Naive thymus-derived CD4-positive, alpha-beta T cell (primary cell): ENCODE measurements at regions of chr14 and their contacts with region 1.

Region 1: DNA sequence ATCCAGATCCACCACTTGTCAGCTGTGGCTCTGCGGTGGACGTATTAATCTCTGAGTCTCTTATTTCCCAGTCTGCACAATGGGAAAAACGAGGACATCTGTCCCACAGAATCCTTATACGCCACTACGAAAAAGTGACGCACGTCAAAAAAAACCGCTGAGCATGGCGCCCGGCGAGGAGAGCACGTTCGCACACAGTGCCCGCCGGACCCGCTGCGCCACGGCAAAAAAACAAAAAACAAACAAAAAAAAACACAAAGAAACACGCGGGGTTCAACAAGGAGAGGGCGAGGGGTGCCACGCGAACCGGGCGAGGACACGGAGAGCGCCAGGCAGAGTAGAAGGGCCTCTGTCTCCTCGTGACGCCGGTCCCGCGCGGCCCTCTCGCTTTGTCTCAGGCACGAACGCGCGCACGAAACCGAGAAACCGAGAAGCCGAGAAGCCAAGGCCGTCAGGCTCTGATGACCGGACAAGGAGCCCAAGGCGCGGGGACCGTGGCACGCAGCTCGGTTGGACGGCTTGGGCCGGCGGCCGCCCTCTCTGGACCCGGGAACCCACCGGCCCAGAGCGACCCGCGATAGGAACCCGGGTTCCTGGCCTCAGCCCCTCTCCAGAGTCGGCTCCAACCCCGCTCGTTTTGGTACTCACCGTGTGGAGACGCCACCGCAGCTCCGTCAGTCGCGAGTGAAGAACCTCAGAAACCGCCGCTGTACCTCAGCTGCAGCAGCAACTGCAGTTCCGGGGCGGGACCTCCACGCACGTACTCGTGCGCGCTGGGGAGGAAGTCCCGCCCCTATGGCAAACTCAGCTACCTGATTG is at the start of gene DDX24:
- DNase-seq: peak; percentile 92 to 97 (median 96)
- ATAC-seq: peak; percentile 99
- H3K4me3 ChIP-seq: peak within 1 kb of the TSS; percentile 74
- H3K4me3 Mint-ChIP-seq: peak within 1 kb of the TSS; percentile 90 to 100 (median 99)
- H3K27ac ChIP-seq: peak within 1 kb of the TSS; percentile 98
- H3K27ac Mint-ChIP-seq: peak within 1 kb of the TSS; percentile 97 to 100 (median 99)
- H3K4me1 ChIP-seq: peaks cover 32 to 38% of the 10 kb centered on the region in 2 donors
- H3K4me1 Mint-ChIP-seq: peaks cover 28 to 60% (median 53%) of the 10 kb centered on the region in 7 donors
- H3K27me3 ChIP-seq: no peaks in the 10 kb centered on the region
- H3K27me3 Mint-ChIP-seq: no peaks in the 10 kb centered on the region
- total RNA-seq, gene DDX24: 214 to 438 (median 333) TPM

Region 2: GRCh38 chr14:92263681-92264080 is 1817.0 kb before region 1 on chr14:
- CTCF ChIA-PET with region 1: no interaction called
- POLR2A ChIA-PET with region 1: no interaction called
- intact Hi-C with region 1: no loop called
- DNase-seq: no peak
- ATAC-seq: peak; percentile 52
- H3K4me3 ChIP-seq: no peak overlapping the region
- H3K4me3 Mint-ChIP-seq: no peak overlapping the region
- H3K27ac ChIP-seq: no peak overlapping the region
- H3K27ac Mint-ChIP-seq: peak overlapping the region in 1 of 9 donors; percentile 7
- H3K4me1 ChIP-seq: no peaks in the 10 kb centered on the region
- H3K4me1 Mint-ChIP-seq: peaks cover 0 to 17% (median 0%) of the 10 kb centered on the region in 7 donors
- H3K27me3 ChIP-seq: no peaks in the 10 kb centered on the region
- H3K27me3 Mint-ChIP-seq: peaks cover 0 to 18% (median 0%) of the 10 kb centered on the region in 5 donors

Region 3: DNA sequence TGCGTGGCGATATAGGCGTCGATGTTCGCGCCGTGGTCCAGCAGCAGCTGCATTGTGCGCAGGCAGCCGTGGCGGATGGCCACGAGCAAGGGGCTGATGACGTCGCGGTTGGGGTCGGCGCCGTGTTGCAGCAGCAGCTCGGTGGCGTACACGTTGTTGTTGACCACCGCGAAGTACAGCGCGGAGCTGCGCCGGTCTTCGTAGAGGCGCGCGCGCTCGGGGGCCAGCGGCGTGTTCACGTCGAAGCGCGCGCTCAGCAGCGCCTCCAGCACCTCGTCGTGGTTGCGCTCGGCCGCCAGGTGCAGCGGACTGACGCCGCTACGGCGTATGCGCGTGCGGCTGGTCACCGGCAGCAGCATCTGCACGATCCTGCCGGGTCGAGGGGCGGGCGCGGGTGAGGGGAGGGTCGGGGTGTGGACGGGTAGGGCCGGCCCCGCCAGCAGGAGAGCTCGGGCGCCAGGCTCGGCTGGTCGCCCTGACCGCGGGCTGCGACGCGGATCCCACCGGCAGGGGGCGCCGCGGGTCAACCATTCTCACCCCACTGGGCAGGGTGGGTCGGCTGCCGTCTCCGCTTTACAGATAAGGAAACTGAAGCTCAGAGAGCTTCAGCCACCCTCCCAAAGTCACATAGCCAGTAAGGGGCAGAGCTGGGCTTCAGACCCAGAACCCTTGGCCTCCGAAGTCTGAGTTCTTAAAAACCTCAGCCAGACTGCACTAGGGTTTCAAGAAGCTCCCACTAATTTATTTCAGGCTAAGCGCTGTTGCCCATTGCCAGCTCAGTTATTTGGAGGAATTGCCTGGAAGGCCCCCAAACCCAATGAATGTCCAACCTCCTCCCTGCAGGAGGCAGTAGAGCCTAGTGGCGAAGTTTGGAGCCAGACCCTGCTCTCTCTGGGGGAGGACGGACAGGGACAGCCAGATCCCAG is 141.1 kb before region 1 on chr14:
- CTCF ChIA-PET with region 1: no interaction called
- POLR2A ChIA-PET with region 1: interaction called, 5 read pairs
- intact Hi-C with region 1: loop called in 1 of 2 experiments (anchors 2 kb)
- DNase-seq: peak; percentile 71 to 97 (median 87)
- ATAC-seq: peak; percentile 95
- H3K4me3 ChIP-seq: peak overlapping the region; percentile 60
- H3K4me3 Mint-ChIP-seq: peak overlapping the region; percentile 18 to 83 (median 68)
- H3K27ac ChIP-seq: no peak overlapping the region
- H3K27ac Mint-ChIP-seq: peak overlapping the region in 1 of 9 donors; percentile 71
- H3K4me1 ChIP-seq: peaks cover 4 to 8% of the 10 kb centered on the region in 2 donors
- H3K4me1 Mint-ChIP-seq: peaks cover 0 to 34% (median 3%) of the 10 kb centered on the region in 7 donors
- H3K27me3 ChIP-seq: no peaks in the 10 kb centered on the region
- H3K27me3 Mint-ChIP-seq: peaks cover 0 to 16% (median 0%) of the 10 kb centered on the region in 5 donors

Region 4: DNA sequence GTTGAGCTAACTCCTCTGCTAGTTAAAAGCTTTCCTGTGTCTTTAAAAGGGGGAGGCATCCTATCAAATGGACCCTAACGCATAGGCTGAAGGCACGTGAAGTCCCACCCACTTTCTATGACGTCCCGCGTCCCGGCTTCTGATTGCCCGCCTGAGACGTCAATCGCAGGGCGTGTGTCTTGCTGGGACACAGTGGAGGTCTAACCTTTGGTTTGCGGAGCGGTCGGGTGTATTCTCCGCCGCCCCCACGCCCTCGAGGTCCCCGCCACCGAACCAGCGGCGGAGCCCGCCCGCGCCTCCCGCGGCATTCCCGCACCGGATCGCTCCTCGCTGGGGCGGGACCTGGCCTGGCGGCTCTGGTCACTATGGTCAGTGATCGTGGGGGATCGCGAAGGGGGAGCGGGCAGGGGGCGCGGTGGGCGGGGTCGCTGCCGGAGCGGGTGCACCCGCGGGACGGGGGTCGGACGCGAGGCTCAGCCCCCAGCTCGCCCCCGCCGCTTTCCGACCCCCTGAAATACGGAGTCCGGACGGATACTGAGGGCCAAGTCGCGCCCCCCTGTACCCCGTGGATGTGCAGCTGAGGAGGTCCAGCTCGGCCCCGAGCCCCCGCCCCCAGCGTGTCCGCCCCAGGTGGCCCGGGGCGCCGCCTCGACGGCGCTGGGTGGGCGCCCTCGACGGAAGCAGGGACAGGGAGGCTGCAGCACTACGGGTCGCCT is 54.3 kb before region 1 on chr14 and contains the start of gene OTUB2:
- CTCF ChIA-PET with region 1: no interaction called
- POLR2A ChIA-PET with region 1: interaction called, 5 read pairs
- intact Hi-C with region 1: loop called (anchors 1 kb)
- DNase-seq: peak; percentile 89 to 98 (median 96)
- ATAC-seq: peak; percentile 100
- H3K4me3 ChIP-seq: peak within 1 kb of the TSS; percentile 51
- H3K4me3 Mint-ChIP-seq: peak within 1 kb of the TSS; percentile 72 to 90 (median 82)
- H3K27ac ChIP-seq: no peak within 1 kb of the TSS
- H3K27ac Mint-ChIP-seq: peak within 1 kb of the TSS in 7 of 9 donors; percentile 20 to 75 (median 66)
- H3K4me1 ChIP-seq: peaks cover 5 to 12% of the 10 kb centered on the region in 2 donors
- H3K4me1 Mint-ChIP-seq: peaks cover 14 to 43% (median 18%) of the 10 kb centered on the region in 7 donors
- H3K27me3 ChIP-seq: no peaks in the 10 kb centered on the region
- H3K27me3 Mint-ChIP-seq: peaks cover 0 to 2% (median 0%) of the 10 kb centered on the region in 5 donors
- total RNA-seq, gene OTUB2: 0.11 to 2.5 (median 0.63) TPM in 4 of 5 experiments, not detected in the other

Region 5: DNA sequence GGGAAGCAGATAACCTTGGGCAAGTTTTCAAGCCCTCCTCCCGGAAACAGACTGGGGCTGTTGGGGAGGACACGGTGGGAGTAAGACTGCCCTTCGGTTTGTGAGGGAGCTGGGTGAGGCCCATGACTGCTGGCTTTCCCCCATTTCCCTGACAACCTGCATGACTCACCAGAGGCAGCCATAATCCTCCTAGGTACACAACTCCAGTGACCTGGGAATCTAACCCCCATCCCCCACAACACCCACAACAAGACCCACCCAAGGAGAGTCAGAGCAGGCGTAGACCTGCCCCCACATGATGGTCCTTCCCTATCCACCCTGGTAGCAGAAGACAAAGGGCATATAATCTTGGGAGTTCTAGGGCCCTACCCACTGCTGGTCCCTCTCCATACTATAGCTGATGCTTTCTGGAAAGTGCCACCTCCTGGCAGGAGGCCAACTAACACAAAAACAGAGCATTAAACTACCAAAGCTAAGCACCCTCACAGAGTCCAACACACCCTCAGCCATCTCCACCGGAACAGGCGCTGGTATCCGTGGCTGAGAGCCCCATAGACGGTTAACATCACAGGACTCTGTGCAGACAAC is 14.5 kb before region 1 on chr14:
- CTCF ChIA-PET with region 1: no interaction called
- POLR2A ChIA-PET with region 1: interaction called, 17 read pairs
- intact Hi-C with region 1: loop called in 1 of 2 experiments (anchors 2 kb)
- DNase-seq: no peak
- ATAC-seq: no peak
- H3K4me3 ChIP-seq: no peak overlapping the region
- H3K4me3 Mint-ChIP-seq: peak overlapping the region in 6 of 10 donors; percentile 30 to 70 (median 56)
- H3K27ac ChIP-seq: no peak overlapping the region
- H3K27ac Mint-ChIP-seq: peak overlapping the region; percentile 2 to 77 (median 63)
- H3K4me1 ChIP-seq: peaks cover 14 to 22% of the 10 kb centered on the region in 2 donors
- H3K4me1 Mint-ChIP-seq: peaks cover 62 to 98% (median 94%) of the 10 kb centered on the region in 7 donors
- H3K27me3 ChIP-seq: no peaks in the 10 kb centered on the region
- H3K27me3 Mint-ChIP-seq: no peaks in the 10 kb centered on the region

Region 6: DNA sequence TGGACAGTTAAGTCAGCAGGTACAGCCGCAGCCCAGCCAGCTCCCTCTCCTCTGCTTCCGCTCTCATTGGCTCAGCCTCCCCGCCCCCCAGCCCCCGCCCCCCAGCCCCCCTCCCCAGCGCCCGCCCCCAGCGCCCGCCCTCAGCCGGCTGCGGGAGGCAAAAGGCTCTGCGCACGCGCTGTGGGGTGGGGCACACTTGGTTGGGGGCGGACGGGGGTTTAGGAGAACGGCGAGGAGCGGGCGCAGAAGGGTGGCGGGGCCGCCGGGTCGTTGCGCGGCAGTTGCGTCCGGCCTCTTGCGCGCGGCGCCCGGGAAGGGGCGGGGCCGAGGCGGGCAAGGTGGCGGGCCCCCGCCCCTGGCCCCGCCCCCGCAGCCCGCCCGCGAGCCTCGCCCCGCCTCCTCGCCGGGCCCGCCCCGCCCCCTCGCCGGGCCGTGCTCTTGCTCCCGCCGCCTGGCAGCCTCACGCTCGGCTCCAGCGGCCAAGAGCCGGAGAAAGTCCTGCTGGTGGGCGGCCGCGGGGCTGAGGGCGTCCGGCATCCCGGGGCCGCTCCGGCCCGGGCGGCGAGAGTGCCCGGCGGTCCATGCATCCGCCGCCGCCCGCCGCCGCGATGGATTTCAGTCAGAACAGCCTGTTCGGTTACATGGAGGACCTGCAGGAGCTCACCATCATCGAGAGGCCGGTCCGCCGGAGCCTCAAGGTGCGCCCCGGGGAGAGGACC is 93.4 kb after region 1 on chr14 and contains the start of gene PPP4R4:
- CTCF ChIA-PET with region 1: no interaction called
- POLR2A ChIA-PET with region 1: interaction called, 16 read pairs
- intact Hi-C with region 1: loop called (anchors 1 to 2 kb)
- DNase-seq: peak; percentile 87 to 92 (median 88)
- ATAC-seq: peak; percentile 96
- H3K4me3 ChIP-seq: peak within 1 kb of the TSS; percentile 77
- H3K4me3 Mint-ChIP-seq: peak within 1 kb of the TSS; percentile 80 to 94 (median 88)
- H3K27ac ChIP-seq: peak within 1 kb of the TSS; percentile 53
- H3K27ac Mint-ChIP-seq: peak within 1 kb of the TSS; percentile 11 to 86 (median 75)
- H3K4me1 ChIP-seq: peaks cover 0 to 16% of the 10 kb centered on the region in 2 donors
- H3K4me1 Mint-ChIP-seq: peaks cover 15 to 29% (median 22%) of the 10 kb centered on the region in 7 donors
- H3K27me3 ChIP-seq: no peaks in the 10 kb centered on the region
- H3K27me3 Mint-ChIP-seq: peaks cover 0 to 59% (median 5%) of the 10 kb centered on the region in 5 donors
- total RNA-seq, gene PPP4R4: 0.44 to 2.4 (median 1.7) TPM

Region 7: GRCh38 chr14:95534299-95535225 is 1453.9 kb after region 1 on chr14 and contains the start of gene GLRX5:
- CTCF ChIA-PET with region 1: no interaction called
- POLR2A ChIA-PET with region 1: no interaction called
- intact Hi-C with region 1: loop called in 1 of 2 experiments (anchors 2 kb)
- DNase-seq: peak; percentile 88 to 100 (median 99)
- ATAC-seq: peak; percentile 92
- H3K4me3 ChIP-seq: peak within 1 kb of the TSS; percentile 77
- H3K4me3 Mint-ChIP-seq: peak within 1 kb of the TSS; percentile 90 to 99 (median 94)
- H3K27ac ChIP-seq: peak within 1 kb of the TSS; percentile 83
- H3K27ac Mint-ChIP-seq: peak within 1 kb of the TSS; percentile 71 to 99 (median 97)
- H3K4me1 ChIP-seq: peaks cover 25 to 27% of the 10 kb centered on the region in 2 donors
- H3K4me1 Mint-ChIP-seq: peaks cover 35 to 92% (median 75%) of the 10 kb centered on the region in 7 donors
- H3K27me3 ChIP-seq: no peaks in the 10 kb centered on the region
- H3K27me3 Mint-ChIP-seq: no peaks in the 10 kb centered on the region
- total RNA-seq, gene GLRX5: 12.3 to 31.6 (median 19.8) TPM